CD8-positive, alpha-beta memory T cell (primary cell): ENCODE measurements at regions of chr1 and their contacts with region 1.

Region 1: GRCh38 chr1:39799770-39800470 is 11.3 kb upstream of the BMP8B start:
- DNase-seq: peak; percentile 51 to 75 (median 56)
- H3K4me3 ChIP-seq: peak overlapping the region; percentile 43
- H3K4me3 Mint-ChIP-seq: peak overlapping the region; percentile 60 to 88 (median 76)
- H3K27ac ChIP-seq: peak overlapping the region; percentile 75
- H3K27ac Mint-ChIP-seq: peak overlapping the region; percentile 29 to 98 (median 92)
- H3K4me1 ChIP-seq: peaks cover 9% of the 10 kb centered on the region
- H3K4me1 Mint-ChIP-seq: peaks cover 8 to 11% (median 11%) of the 10 kb centered on the region in 3 donors
- H3K27me3 ChIP-seq: no peaks in the 10 kb centered on the region
- H3K27me3 Mint-ChIP-seq: no peaks in the 10 kb centered on the region

Region 2: DNA sequence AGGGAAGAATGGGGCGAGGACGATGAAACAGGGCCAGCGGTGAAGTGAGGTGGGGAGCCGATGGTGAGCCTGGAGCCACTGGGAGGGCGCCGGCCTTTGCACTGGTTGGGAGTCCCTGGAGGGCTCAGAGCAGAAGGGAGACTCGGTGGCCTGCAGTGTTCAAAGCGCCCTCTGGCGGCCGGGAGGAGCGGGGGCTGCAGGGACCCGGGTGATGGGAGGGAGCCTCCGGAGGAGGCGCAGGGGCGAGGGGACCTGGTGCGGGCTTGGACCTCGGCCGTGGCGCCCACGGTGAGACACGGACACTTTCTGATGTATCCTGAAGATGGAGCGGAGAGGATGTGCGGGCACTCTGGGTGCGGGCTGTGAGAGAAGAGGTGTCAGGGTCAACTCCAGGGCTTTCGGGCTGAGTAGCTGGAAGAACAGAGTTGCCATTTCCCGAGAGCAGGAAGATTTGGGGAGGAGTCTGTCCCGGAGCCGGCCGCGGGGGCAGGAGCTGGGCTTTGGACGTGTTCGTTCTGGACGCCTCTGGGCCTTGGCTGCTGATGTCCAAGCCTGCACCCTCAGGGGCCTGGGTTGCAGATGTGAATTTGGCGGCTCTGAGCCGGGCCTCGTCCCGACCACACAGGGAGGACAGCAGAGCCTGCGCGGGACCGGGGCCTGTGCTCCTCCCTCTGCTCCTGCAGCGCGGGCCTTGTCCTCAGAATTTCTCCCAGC is 190.1 kb before region 1 on chr1:
- CTCF ChIA-PET with region 1: interaction called, 29 read pairs
- POLR2A ChIA-PET with region 1: no interaction called
- DNase-seq: peak; percentile 40 to 75 (median 52)
- H3K4me3 ChIP-seq: no peak overlapping the region
- H3K4me3 Mint-ChIP-seq: peak overlapping the region in 1 of 7 donors; percentile 11
- H3K27ac ChIP-seq: no peak overlapping the region
- H3K27ac Mint-ChIP-seq: peak overlapping the region in 1 of 8 donors; percentile 22
- H3K4me1 ChIP-seq: no peaks in the 10 kb centered on the region
- H3K4me1 Mint-ChIP-seq: peaks cover 7 to 16% (median 11%) of the 10 kb centered on the region in 3 donors
- H3K27me3 ChIP-seq: no peaks in the 10 kb centered on the region
- H3K27me3 Mint-ChIP-seq: peaks cover 12 to 17% of the 10 kb centered on the region in 2 donors

Region 3: GRCh38 chr1:39779821-39780220 is 20.1 kb before region 1 on chr1:
- CTCF ChIA-PET with region 1: interaction called, 12 read pairs
- POLR2A ChIA-PET with region 1: no interaction called
- DNase-seq: no peak
- H3K4me3 ChIP-seq: no peak overlapping the region
- H3K4me3 Mint-ChIP-seq: peak overlapping the region in 1 of 7 donors; percentile 23
- H3K27ac ChIP-seq: no peak overlapping the region
- H3K27ac Mint-ChIP-seq: no peak overlapping the region
- H3K4me1 ChIP-seq: no peaks in the 10 kb centered on the region
- H3K4me1 Mint-ChIP-seq: no peaks in the 10 kb centered on the region
- H3K27me3 ChIP-seq: no peaks in the 10 kb centered on the region
- H3K27me3 Mint-ChIP-seq: no peaks in the 10 kb centered on the region

Region 4: DNA sequence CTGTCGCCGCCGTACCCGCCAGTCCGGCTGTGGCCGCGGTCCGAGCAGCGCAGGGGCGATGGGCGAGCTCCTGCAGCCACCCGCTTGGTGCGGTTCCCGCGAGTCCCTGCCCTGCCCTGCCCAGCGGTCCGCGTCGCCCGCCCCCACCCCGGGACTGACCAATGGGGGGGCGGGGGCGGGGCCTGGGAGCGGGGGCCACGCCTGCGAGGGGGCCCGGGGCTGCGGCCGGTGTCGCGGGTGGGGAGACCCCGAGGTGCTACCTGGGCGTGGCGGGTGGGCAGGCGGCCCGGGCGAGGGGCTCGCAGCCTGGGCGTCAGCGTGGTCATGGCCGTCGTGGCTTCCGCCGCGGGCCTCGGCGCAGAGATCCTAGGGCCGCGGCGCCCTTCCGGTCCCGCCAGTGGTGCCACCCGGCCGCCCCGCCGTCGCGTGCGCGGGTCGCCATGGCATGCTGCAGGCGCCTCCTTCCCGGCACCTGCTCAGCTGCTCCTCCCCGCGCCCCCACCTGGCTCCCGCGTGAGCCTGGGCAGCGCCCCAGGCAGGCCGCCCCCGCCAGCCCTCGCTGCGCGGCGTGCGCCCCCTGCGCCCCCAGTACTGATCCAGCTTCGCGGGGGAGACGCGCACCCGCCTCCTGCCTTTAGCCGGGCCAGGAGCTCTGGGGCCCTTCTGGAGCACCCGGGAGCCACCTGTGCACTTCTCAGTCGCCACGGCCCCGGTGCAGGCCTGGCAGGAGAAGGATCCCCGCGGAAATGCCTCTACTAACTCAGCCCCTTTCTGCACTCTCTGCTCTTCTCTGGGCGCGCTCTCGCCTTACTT is 11.0 kb before region 1 on chr1 and contains the start of gene BMP8B:
- CTCF ChIA-PET with region 1: interaction called, 14 read pairs
- POLR2A ChIA-PET with region 1: interaction called, 10 read pairs
- DNase-seq: peak; percentile 33 to 70 (median 52)
- H3K4me3 ChIP-seq: peak within 1 kb of the TSS; percentile 43
- H3K4me3 Mint-ChIP-seq: peak within 1 kb of the TSS; percentile 67 to 87 (median 82)
- H3K27ac ChIP-seq: no peak within 1 kb of the TSS
- H3K27ac Mint-ChIP-seq: peak within 1 kb of the TSS in 5 of 8 donors; percentile 68 to 89 (median 74)
- H3K4me1 ChIP-seq: peaks cover 6% of the 10 kb centered on the region
- H3K4me1 Mint-ChIP-seq: peaks cover 6 to 27% (median 12%) of the 10 kb centered on the region in 3 donors
- H3K27me3 ChIP-seq: no peaks in the 10 kb centered on the region
- H3K27me3 Mint-ChIP-seq: peaks cover 9 to 10% of the 10 kb centered on the region in 2 donors
- total RNA-seq, gene BMP8B: 0.91 to 1.2 TPM

Region 5: GRCh38 chr1:39816415-39817090 is 16.6 kb after region 1 on chr1:
- CTCF ChIA-PET with region 1: interaction called, 11 read pairs
- POLR2A ChIA-PET with region 1: no interaction called
- DNase-seq: peak; percentile 32 to 67 (median 51)
- H3K4me3 ChIP-seq: no peak overlapping the region
- H3K4me3 Mint-ChIP-seq: peak overlapping the region; percentile 18 to 88 (median 79)
- H3K27ac ChIP-seq: no peak overlapping the region
- H3K27ac Mint-ChIP-seq: no peak overlapping the region
- H3K4me1 ChIP-seq: peaks cover 5% of the 10 kb centered on the region
- H3K4me1 Mint-ChIP-seq: peaks cover 5 to 11% (median 6%) of the 10 kb centered on the region in 3 donors
- H3K27me3 ChIP-seq: peaks cover 5% of the 10 kb centered on the region
- H3K27me3 Mint-ChIP-seq: peaks cover 3 to 30% of the 10 kb centered on the region in 2 donors

Region 6: GRCh38 chr1:39919545-39919944 is 119.6 kb after region 1 on chr1:
- CTCF ChIA-PET with region 1: no interaction called
- POLR2A ChIA-PET with region 1: no interaction called
- DNase-seq: peak in 4 of 5 donors; percentile 8 to 61 (median 54)
- H3K4me3 ChIP-seq: no peak overlapping the region
- H3K4me3 Mint-ChIP-seq: no peak overlapping the region
- H3K27ac ChIP-seq: no peak overlapping the region
- H3K27ac Mint-ChIP-seq: no peak overlapping the region
- H3K4me1 ChIP-seq: peaks cover 4% of the 10 kb centered on the region
- H3K4me1 Mint-ChIP-seq: peaks cover 0 to 3% (median 0%) of the 10 kb centered on the region in 3 donors
- H3K27me3 ChIP-seq: no peaks in the 10 kb centered on the region
- H3K27me3 Mint-ChIP-seq: peaks cover 1 to 9% of the 10 kb centered on the region in 2 donors